OCI-LY7 (cell line): ENCODE measurements at regions of chr3 and their contacts with region 1.

Region 1: GRCh38 chr3:118661702-118662101 is 372.9 kb downstream of the IGSF11 start:
- DNase-seq: no peak
- H3K4me3 ChIP-seq: no peak overlapping the region
- H3K27ac ChIP-seq: no peak overlapping the region
- H3K4me1 ChIP-seq: no peaks in the 10 kb centered on the region
- CTCF ChIP-seq: no peak

Region 2: DNA sequence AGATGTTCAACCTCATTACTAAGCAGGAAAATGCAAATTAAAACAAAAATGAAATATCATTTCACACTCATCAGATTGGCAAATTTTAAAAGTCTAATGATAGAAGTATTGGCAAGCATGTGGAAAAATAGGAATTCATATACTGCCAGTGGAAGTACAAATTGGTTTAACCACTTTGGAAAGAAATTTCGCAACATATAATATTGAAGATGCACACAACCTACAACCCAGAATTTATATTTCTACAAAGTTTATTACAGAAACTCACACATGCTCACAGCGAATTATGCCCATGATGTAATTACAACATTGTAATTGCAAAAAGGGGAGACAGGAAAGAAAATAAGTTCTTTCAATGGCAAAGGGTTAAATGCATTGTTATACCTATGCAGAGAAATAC is 48.8 kb after region 1 on chr3:
- CTCF ChIA-PET with region 1: no interaction called
- POLR2A ChIA-PET with region 1: no interaction called
- intact Hi-C with region 1: loop called (anchors 2 kb)
- DNase-seq: no peak
- H3K4me3 ChIP-seq: no peak overlapping the region
- H3K27ac ChIP-seq: no peak overlapping the region
- H3K4me1 ChIP-seq: no peaks in the 10 kb centered on the region
- CTCF ChIP-seq: no peak